Endothelial cell of umbilical vein (primary cell): ENCODE measurements at regions of chr4 and their contacts with region 1.

Region 1: GRCh38 chr4:74418063-74418670 is 26.8 kb upstream of the AREG start:
- DNase-seq: peak; percentile 95
- H3K4me3 ChIP-seq: no peak overlapping the region
- H3K27ac ChIP-seq: peak overlapping the region; percentile 58
- H3K4me1 ChIP-seq: peaks cover 18% of the 10 kb centered on the region
- H3K27me3 ChIP-seq: no peaks in the 10 kb centered on the region
- CTCF ChIP-seq: no peak
- POLR2A ChIP-seq: no peak

Region 2: GRCh38 chr4:74400396-74400795 is 17.8 kb before region 1 on chr4:
- CTCF ChIA-PET with region 1: no interaction called
- POLR2A ChIA-PET with region 1: no interaction called
- dilution Hi-C with region 1: no loop called
- intact Hi-C with region 1: no loop called
- DNase-seq: no peak
- H3K4me3 ChIP-seq: no peak overlapping the region
- H3K27ac ChIP-seq: no peak overlapping the region
- H3K4me1 ChIP-seq: no peaks in the 10 kb centered on the region
- H3K27me3 ChIP-seq: no peaks in the 10 kb centered on the region
- CTCF ChIP-seq: no peak
- POLR2A ChIP-seq: no peak

Region 3: GRCh38 chr4:74451200-74451661 is 33.1 kb after region 1 on chr4:
- CTCF ChIA-PET with region 1: interaction called, 3 read pairs
- POLR2A ChIA-PET with region 1: no interaction called
- dilution Hi-C with region 1: no loop called
- intact Hi-C with region 1: loop called (anchors 5 kb)
- DNase-seq: peak; percentile 72
- H3K4me3 ChIP-seq: no peak overlapping the region
- H3K27ac ChIP-seq: peak overlapping the region; percentile 12
- H3K4me1 ChIP-seq: peaks cover 13% of the 10 kb centered on the region
- H3K27me3 ChIP-seq: no peaks in the 10 kb centered on the region
- CTCF ChIP-seq: no peak
- POLR2A ChIP-seq: no peak